Naive thymus-derived CD4-positive, alpha-beta T cell (primary cell): ENCODE measurements at regions of chr12 and their contacts with region 1.

Region 1: DNA sequence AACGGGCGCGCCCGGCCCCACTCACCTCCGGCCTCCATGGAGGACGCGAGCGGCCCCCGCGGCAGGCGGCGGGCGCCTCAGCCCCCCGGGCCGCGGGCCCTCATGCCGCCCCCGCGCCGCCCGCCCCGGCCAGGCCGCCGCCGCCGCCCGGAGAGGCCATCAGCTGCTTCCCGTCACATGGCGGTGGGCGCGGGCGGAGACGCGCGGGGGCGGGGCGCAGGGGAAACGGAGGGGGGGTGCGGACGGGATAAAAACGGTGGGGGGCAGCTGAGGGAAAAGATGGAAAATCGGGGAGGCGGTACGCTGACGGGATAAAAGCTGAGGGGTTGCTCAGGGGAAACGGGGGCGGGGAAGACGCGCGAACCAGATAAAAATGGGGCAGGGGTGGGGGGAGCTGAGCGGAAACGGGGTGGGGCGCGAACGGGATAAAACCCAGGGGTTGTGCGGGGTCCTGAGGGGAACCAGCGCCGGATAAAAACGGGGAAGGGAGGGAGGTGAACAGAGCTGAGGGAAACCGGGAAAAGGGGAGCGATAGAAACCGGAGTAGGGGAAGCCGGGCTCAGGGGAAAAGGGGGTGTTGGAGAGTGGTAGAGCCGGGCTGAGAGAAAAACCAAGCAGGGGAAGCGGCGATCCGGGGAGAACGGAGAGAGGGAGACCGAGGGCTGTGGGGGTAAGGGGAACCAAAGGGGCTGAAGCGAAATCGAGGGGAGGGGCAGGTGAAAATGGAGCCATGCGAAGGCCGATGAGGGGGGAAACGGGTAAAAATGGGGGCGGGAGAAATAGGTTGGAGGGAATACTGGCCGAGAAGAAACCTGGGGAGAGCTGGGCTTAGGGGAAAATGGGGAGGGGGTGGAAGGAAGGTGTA is at the start of gene WSB2:
- DNase-seq: peak; percentile 24 to 81 (median 39)
- ATAC-seq: peak; percentile 53
- H3K4me3 ChIP-seq: peak within 1 kb of the TSS; percentile 88
- H3K4me3 Mint-ChIP-seq: peak within 1 kb of the TSS; percentile 88 to 100 (median 96)
- H3K27ac ChIP-seq: peak within 1 kb of the TSS; percentile 80
- H3K27ac Mint-ChIP-seq: peak within 1 kb of the TSS; percentile 92 to 98 (median 94)
- H3K4me1 ChIP-seq: peaks cover 13 to 32% of the 10 kb centered on the region in 2 donors
- H3K4me1 Mint-ChIP-seq: peaks cover 44 to 65% (median 57%) of the 10 kb centered on the region in 7 donors
- H3K27me3 ChIP-seq: no peaks in the 10 kb centered on the region
- H3K27me3 Mint-ChIP-seq: no peaks in the 10 kb centered on the region
- total RNA-seq, gene WSB2: 12.2 to 52.2 (median 19.1) TPM

Region 2: DNA sequence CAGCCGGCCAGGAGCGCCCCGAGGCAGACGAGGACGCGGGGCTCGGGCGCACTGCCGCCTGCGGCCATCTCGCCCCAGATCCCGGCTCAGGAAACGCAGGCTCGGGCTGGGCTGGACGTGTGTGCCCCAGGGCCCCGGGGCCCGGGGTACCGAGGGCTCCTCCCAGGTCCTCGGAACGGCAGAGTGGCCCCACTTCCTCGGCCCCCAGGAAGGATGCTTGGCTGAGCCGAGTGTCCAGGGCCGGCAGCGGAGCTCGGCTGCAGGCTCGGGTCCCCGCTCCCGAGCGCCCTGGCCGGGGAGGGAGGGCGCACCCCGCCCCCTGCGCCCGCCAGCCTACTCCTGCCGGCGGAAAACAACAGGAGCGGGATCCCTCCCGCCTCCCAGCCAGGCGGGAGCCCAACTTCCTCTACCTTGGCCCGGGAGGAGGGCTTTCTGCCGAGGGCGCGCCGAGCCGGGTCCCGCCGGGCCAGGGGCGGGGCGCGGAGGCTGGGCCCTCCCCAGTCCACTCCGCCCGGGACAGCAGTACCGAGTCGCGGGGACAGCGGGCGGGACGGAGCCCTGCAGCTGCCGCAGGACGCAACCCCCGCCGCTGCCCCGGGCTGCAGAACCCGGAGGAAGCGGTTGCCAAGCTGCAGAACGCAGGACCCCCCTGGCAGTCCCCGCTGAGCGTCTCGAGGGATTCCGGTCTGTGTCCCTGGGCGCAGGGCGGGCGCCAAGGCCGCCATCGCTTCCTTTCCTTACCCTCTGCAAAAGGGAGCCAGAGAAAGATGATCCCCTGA is 42.5 kb after region 1 on chr12 and contains the start of gene VSIG10:
- CTCF ChIA-PET with region 1: no interaction called
- POLR2A ChIA-PET with region 1: no interaction called
- intact Hi-C with region 1: loop called (anchors 2 to 5 kb)
- DNase-seq: peak in 6 of 9 donors; percentile 8 to 54 (median 14)
- ATAC-seq: peak; percentile 77
- H3K4me3 ChIP-seq: peak within 1 kb of the TSS; percentile 54
- H3K4me3 Mint-ChIP-seq: peak within 1 kb of the TSS; percentile 74 to 95 (median 88)
- H3K27ac ChIP-seq: no peak within 1 kb of the TSS
- H3K27ac Mint-ChIP-seq: no peak within 1 kb of the TSS
- H3K4me1 ChIP-seq: no peaks in the 10 kb centered on the region
- H3K4me1 Mint-ChIP-seq: peaks cover 5 to 10% (median 9%) of the 10 kb centered on the region in 7 donors
- H3K27me3 ChIP-seq: peaks cover 0 to 4% of the 10 kb centered on the region in 2 donors
- H3K27me3 Mint-ChIP-seq: peaks cover 15 to 28% (median 18%) of the 10 kb centered on the region in 5 donors
- total RNA-seq, gene VSIG10: 3.9 to 8.5 (median 5.3) TPM

Region 3: GRCh38 chr12:118183705-118184104 is 122.5 kb after region 1 on chr12:
- CTCF ChIA-PET with region 1: no interaction called
- POLR2A ChIA-PET with region 1: no interaction called
- intact Hi-C with region 1: loop called in 1 of 2 experiments (anchors 5 kb)
- DNase-seq: no peak
- ATAC-seq: no peak
- H3K4me3 ChIP-seq: no peak overlapping the region
- H3K4me3 Mint-ChIP-seq: no peak overlapping the region
- H3K27ac ChIP-seq: no peak overlapping the region
- H3K27ac Mint-ChIP-seq: peak overlapping the region in 1 of 9 donors; percentile 58
- H3K4me1 ChIP-seq: no peaks in the 10 kb centered on the region
- H3K4me1 Mint-ChIP-seq: peaks cover 7 to 33% (median 16%) of the 10 kb centered on the region in 7 donors
- H3K27me3 ChIP-seq: no peaks in the 10 kb centered on the region
- H3K27me3 Mint-ChIP-seq: no peaks in the 10 kb centered on the region